CD4-positive, alpha-beta memory T cell (primary cell): ENCODE measurements at regions of chr5 and their contacts with region 1.

Region 1: DNA sequence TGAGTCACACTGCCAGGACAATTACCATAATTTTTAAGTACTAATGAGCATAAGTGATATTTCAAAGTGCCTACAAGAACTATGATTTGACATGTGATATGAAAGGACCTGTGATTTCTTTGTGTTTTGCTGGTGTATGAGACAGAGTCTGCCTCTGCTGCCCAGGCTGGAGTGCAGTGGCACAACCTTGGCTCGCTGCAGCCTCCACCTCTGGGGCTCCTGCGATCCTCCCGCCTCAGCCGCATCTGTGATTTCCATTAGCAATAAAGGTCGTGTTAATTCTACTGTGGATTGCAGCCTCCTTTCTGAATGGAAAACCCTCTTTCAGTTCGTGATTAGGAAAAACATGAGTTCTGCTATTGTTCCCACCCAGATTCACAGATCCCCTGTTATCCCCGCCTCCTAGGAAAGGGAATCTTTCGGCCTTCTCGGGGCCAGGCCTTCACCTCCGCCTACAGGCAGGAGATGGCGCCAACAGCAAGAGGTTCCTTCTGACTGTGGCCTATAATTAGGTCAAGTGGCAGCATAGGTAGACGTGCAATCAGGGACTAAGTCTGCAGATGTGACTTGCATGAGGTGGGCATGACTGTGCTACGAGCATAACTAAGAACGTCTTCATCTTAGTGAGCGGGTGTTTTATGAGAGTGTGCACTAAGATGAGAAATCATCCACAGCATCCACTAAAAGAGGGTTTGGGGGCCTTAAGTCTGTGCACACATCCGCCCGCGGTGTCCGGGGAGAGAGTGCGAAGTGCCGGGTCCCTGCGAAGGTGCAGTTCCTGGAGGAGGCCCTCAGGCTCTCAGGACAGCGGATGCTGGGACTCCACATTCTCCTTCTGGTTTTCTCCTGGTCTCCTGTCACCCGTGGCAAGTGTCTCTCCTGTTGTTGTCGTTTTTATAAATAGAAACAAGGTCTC is 23.1 kb downstream of the TRIM7 start:
- DNase-seq: peak; percentile 65 to 78 (median 76)
- H3K4me3 ChIP-seq: no peak overlapping the region
- H3K4me3 Mint-ChIP-seq: peak overlapping the region; percentile 26 to 94 (median 84)
- H3K27ac ChIP-seq: no peak overlapping the region
- H3K27ac Mint-ChIP-seq: peak overlapping the region; percentile 48 to 95 (median 88)
- H3K4me1 ChIP-seq: peaks cover 14% of the 10 kb centered on the region
- H3K4me1 Mint-ChIP-seq: peaks cover 11 to 42% (median 22%) of the 10 kb centered on the region in 4 donors
- H3K27me3 ChIP-seq: no peaks in the 10 kb centered on the region
- H3K27me3 Mint-ChIP-seq: peaks cover 0 to 2% of the 10 kb centered on the region in 2 donors

Region 2: GRCh38 chr5:180810210-180810958 is 371.5 kb before region 1 on chr5:
- CTCF ChIA-PET with region 1: no interaction called
- POLR2A ChIA-PET with region 1: no interaction called
- intact Hi-C with region 1: loop called (anchors 10 kb)
- DNase-seq: peak; percentile 95 to 99 (median 98)
- H3K4me3 ChIP-seq: peak overlapping the region; percentile 60 to 95
- H3K4me3 Mint-ChIP-seq: peak overlapping the region; percentile 83 to 99 (median 90)
- H3K27ac ChIP-seq: peak overlapping the region; percentile 93
- H3K27ac Mint-ChIP-seq: peak overlapping the region; percentile 92 to 100 (median 99)
- H3K4me1 ChIP-seq: peaks cover 61% of the 10 kb centered on the region
- H3K4me1 Mint-ChIP-seq: peaks cover 53 to 87% (median 69%) of the 10 kb centered on the region in 4 donors
- H3K27me3 ChIP-seq: no peaks in the 10 kb centered on the region
- H3K27me3 Mint-ChIP-seq: no peaks in the 10 kb centered on the region

Region 3: DNA sequence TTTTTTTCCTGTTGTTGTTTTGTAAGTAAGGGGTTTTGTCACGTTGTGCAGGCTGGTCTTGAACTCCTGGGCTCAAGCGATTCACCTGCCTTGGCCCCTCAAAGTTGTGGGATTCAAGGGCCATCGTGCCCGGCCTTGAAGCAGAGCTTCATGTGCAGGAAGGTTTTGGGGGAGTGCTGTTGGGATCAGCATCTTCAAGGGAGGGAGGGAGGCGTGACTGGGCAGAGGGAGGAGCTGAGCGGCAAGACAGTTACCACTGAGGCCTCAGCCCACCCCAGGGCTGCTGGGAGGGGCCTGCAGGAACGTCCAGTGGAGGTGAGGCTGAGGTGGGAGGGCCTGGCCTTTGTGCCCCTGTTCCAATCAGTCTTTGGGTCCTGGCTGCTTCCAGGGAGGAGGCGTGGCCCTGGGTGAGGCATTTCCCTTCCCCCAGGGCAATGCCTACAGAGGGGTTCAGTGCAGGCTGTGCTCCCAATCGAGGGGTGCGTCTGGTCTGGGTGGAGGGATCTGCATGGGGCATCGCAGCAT is 72.4 kb before region 1 on chr5:
- CTCF ChIA-PET with region 1: no interaction called
- POLR2A ChIA-PET with region 1: no interaction called
- intact Hi-C with region 1: no loop called
- DNase-seq: no peak
- H3K4me3 ChIP-seq: no peak overlapping the region
- H3K4me3 Mint-ChIP-seq: peak overlapping the region in 1 of 8 donors; percentile 2
- H3K27ac ChIP-seq: no peak overlapping the region
- H3K27ac Mint-ChIP-seq: no peak overlapping the region
- H3K4me1 ChIP-seq: no peaks in the 10 kb centered on the region
- H3K4me1 Mint-ChIP-seq: peaks cover 0 to 3% (median 2%) of the 10 kb centered on the region in 4 donors
- H3K27me3 ChIP-seq: no peaks in the 10 kb centered on the region
- H3K27me3 Mint-ChIP-seq: peaks cover 67 to 69% of the 10 kb centered on the region in 2 donors

Region 4: DNA sequence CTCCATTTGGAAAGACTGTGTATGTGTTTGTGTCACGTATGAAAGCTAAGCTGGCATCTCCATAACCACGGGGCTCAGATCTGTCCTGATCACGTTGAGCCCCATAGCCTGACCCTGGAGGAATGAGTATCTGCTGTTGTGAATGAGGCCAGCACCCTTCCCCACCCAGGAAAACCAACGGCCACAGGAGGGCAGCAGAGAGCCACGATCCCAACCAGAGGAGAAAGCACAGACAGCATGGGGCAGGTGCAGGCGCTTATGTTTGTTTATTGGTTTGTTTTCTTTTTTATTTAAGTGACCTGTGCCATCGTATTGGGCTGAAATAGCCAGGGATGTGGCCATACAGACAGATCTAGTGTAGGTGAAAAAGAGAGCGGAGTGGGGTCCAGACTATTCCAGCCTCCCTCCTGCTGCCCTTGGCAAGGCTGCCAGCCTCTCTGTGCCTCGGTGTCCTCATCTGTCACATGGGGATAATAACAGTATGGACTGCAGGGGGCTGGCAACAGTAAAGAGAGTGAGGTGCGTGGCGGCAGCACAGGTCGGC is 22.6 kb before region 1 on chr5:
- CTCF ChIA-PET with region 1: interaction called, 5 read pairs
- POLR2A ChIA-PET with region 1: interaction called, 3 read pairs
- intact Hi-C with region 1: loop called (anchors 2 kb)
- DNase-seq: peak; percentile 82 to 89 (median 87)
- H3K4me3 ChIP-seq: no peak overlapping the region
- H3K4me3 Mint-ChIP-seq: peak overlapping the region; percentile 74 to 89 (median 82)
- H3K27ac ChIP-seq: peak overlapping the region; percentile 90
- H3K27ac Mint-ChIP-seq: peak overlapping the region; percentile 92 to 99 (median 97)
- H3K4me1 ChIP-seq: peaks cover 23% of the 10 kb centered on the region
- H3K4me1 Mint-ChIP-seq: peaks cover 12 to 35% (median 21%) of the 10 kb centered on the region in 4 donors
- H3K27me3 ChIP-seq: peaks cover 2% of the 10 kb centered on the region
- H3K27me3 Mint-ChIP-seq: peaks cover 7 to 26% of the 10 kb centered on the region in 2 donors

Region 5: DNA sequence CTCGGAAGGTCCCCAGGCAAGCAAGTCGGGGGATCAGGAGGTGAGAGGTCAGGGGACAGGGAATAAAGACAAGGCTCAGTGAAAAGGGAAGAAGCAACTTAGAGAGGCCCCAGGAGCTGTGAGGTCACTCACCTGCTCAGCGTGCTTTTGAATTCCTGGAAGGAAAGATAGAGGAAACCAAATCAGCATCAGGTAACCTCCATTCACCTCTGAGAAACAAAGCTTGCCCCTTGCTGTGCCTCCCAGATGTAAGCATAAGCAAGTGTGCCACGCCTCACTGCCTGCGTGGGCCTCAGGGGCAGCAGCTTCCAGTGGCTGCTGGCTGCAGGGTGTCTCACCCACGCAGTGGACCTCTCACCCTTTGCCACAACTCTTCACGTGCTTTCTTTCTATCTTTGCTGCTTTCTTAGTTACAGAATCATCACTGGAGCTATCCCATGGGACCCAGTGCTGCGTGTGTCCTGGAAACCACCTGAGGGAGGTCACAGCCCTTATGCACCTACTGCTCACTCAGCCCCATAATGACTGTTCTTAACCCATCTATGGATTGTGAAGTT is 17.1 kb after region 1 on chr5:
- CTCF ChIA-PET with region 1: interaction called, 6 read pairs
- POLR2A ChIA-PET with region 1: interaction called, 412 read pairs
- intact Hi-C with region 1: no loop called
- DNase-seq: no peak
- H3K4me3 ChIP-seq: no peak overlapping the region
- H3K4me3 Mint-ChIP-seq: no peak overlapping the region
- H3K27ac ChIP-seq: no peak overlapping the region
- H3K27ac Mint-ChIP-seq: no peak overlapping the region
- H3K4me1 ChIP-seq: peaks cover 3% of the 10 kb centered on the region
- H3K4me1 Mint-ChIP-seq: peaks cover 0 to 4% (median 1%) of the 10 kb centered on the region in 4 donors
- H3K27me3 ChIP-seq: no peaks in the 10 kb centered on the region
- H3K27me3 Mint-ChIP-seq: no peaks in the 10 kb centered on the region

Region 6: DNA sequence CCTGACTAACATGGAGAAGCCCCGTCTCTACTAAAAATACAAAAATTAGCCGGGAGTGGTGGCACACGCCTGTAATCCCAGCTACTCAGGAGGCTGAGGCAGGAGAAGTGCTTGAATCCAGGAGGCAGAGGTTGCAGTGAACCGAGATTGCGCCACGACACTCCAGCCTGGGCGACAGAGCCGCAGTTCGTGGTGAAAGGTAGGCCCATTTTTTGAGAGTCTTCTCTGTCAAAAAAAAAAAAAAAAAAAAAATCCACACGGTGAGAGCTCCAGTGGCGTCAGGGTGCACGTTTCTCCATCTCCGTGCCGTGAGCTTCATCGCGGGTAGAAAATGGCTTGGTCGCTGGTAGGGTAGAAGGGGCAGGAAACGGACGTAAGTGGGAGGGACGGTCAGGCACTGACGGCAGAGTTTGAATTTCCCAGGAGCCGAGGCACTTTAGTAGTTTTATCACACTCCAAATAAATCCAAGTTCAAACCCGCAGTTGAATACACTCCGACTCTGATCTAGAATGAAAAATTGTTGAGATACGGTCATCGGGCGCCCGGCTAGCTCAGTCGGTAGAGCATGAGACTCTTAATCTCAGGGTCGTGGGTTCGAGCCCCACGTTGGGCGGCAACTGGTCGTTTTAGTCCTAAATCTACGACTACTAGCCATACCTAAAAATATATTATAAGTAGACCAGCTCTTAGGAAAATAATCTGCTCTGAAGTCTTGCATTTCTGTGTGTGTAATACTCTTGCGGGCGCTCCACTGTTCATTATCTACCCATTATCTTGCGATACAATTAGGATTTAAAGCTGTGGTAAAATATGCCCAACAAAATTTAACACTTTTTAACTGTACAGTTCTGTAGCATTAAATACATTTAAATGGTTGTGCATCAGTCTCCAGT is 25.6 kb after region 1 on chr5:
- CTCF ChIA-PET with region 1: interaction called, 19 read pairs
- POLR2A ChIA-PET with region 1: interaction called, 412 read pairs
- intact Hi-C with region 1: no loop called
- DNase-seq: peak; percentile 76 to 88 (median 81)
- H3K4me3 ChIP-seq: peak overlapping the region; percentile 71
- H3K4me3 Mint-ChIP-seq: peak overlapping the region; percentile 88 to 97 (median 92)
- H3K27ac ChIP-seq: peak overlapping the region; percentile 67
- H3K27ac Mint-ChIP-seq: peak overlapping the region; percentile 91 to 100 (median 98)
- H3K4me1 ChIP-seq: peaks cover 31% of the 10 kb centered on the region
- H3K4me1 Mint-ChIP-seq: peaks cover 24 to 47% (median 32%) of the 10 kb centered on the region in 4 donors
- H3K27me3 ChIP-seq: no peaks in the 10 kb centered on the region
- H3K27me3 Mint-ChIP-seq: peaks cover 7 to 10% of the 10 kb centered on the region in 2 donors

Region 7: DNA sequence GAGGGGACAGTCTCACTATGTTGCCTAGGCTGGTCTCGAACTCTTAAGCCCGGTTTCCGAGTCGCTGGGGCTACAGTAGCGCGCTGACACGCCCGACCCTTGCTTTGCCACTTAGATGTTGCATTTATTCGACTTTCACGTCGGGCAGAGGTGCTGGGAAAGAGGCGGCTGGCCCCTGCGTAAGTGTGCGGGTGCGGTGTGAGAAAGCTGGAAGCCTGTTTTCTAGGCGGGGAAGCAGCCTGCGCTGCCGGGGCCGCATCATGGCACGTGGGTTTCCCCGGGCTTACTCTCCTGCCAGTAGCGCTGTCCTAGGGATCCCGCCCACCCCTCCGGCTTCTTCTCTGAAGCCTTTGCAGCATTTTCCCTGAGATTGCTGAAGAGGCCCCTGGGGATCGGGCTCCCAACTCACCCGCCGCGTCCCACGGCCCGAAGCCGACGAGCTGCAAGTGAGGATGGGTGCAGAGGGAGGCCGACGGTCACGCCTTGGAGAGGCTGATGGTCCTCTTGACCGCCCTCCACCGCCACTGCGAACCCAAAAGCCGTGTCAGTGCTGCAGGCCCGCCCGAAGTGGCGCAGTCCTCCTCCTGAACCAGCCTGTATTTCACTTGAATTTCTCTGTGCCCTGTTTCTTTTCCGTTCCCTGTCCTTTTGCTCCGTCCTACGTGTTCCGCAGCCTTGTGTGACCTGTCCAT is 35.3 kb after region 1 on chr5:
- CTCF ChIA-PET with region 1: interaction called, 10 read pairs
- POLR2A ChIA-PET with region 1: interaction called, 375 read pairs
- intact Hi-C with region 1: no loop called
- DNase-seq: peak; percentile 66 to 84 (median 71)
- H3K4me3 ChIP-seq: peak overlapping the region; percentile 32 to 61
- H3K4me3 Mint-ChIP-seq: peak overlapping the region; percentile 95 to 100 (median 99)
- H3K27ac ChIP-seq: peak overlapping the region; percentile 54
- H3K27ac Mint-ChIP-seq: peak overlapping the region; percentile 96 to 100 (median 98)
- H3K4me1 ChIP-seq: peaks cover 36% of the 10 kb centered on the region
- H3K4me1 Mint-ChIP-seq: peaks cover 27 to 60% (median 44%) of the 10 kb centered on the region in 4 donors
- H3K27me3 ChIP-seq: no peaks in the 10 kb centered on the region
- H3K27me3 Mint-ChIP-seq: peaks cover 2 to 20% of the 10 kb centered on the region in 2 donors

Region 8: DNA sequence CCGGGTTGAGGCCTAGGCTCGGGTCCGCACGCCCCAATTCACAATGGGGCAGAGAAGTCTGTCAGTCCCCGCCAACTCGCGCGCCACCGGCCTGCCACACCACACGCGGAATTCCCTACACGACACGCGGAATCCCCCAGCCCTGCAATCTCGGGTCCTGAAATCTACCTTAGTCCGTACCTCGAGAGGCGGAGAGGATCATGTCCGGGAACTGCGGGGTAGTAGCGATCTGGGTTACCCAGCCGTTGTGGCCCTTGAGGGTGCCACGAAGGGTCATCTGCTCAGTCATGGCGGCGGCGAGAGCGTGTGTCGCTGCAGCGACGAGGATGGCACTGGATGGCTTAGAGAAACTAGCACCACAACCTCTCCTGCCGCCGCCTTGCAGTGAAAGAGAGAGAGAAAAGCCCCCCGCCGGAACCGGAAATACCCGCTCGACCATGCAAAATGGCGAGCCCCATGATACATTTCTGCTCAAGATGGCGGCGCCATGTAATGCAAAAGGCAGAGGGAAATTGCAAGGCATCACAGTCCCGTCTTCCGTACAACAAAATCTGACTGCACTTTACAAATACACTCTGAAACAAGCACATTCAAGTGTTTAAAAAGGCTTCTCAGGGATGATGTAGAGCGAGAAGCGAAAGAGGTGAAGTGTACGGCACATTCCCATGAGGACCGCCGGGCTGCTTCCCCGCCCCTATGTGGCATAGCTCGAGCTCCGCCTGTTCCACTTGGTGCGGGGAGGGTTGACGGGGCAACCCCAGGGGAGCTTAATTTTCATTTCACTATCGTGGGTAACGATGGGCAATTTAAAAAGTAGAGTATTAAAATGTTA is 61.8 kb after region 1 on chr5 and contains the start of gene RACK1:
- CTCF ChIA-PET with region 1: interaction called, 5 read pairs
- POLR2A ChIA-PET with region 1: interaction called, 37 read pairs
- intact Hi-C with region 1: no loop called
- DNase-seq: peak; percentile 90 to 95 (median 91)
- H3K4me3 ChIP-seq: peak within 1 kb of the TSS; percentile 97 to 98
- H3K4me3 Mint-ChIP-seq: peak within 1 kb of the TSS; percentile 93 to 100 (median 98)
- H3K27ac ChIP-seq: peak within 1 kb of the TSS; percentile 96
- H3K27ac Mint-ChIP-seq: peak within 1 kb of the TSS; percentile 96 to 100 (median 99)
- H3K4me1 ChIP-seq: peaks cover 61% of the 10 kb centered on the region
- H3K4me1 Mint-ChIP-seq: peaks cover 42 to 85% (median 63%) of the 10 kb centered on the region in 4 donors
- H3K27me3 ChIP-seq: no peaks in the 10 kb centered on the region
- H3K27me3 Mint-ChIP-seq: no peaks in the 10 kb centered on the region
- total RNA-seq, gene RACK1: 1,956 to 2,001 TPM